ENCODE measurements at regions of chr5 and their contacts with region 1.

Region 1: GRCh38 chr5:52989781-52990527 is 802 bp downstream of the ITGA2 start:
- DNase-seq: peak; percentile 30 to 52
- ATAC-seq: peak; percentile 47 to 75 (median 56)
- H3K4me3 ChIP-seq: peak overlapping the region; percentile 75
- H3K27ac ChIP-seq: no peak overlapping the region
- H3K4me1 ChIP-seq: peaks cover 9% of the 10 kb centered on the region
- H3K27me3 ChIP-seq: peaks cover 0 to 29% (median 2%) of the 10 kb centered on the region in 3 donors
- CTCF ChIP-seq: peak; percentile 22

Region 2: GRCh38 chr5:53031695-53032096 is 41.7 kb after region 1 on chr5:
- intact Hi-C with region 1: loop called in 1 of 2 experiments (anchors 5 kb)
- DNase-seq: no peak
- ATAC-seq: no peak
- H3K4me3 ChIP-seq: no peak overlapping the region
- H3K27ac ChIP-seq: no peak overlapping the region
- H3K4me1 ChIP-seq: no peaks in the 10 kb centered on the region
- H3K27me3 ChIP-seq: no peaks in the 10 kb centered on the region
- CTCF ChIP-seq: no peak

Region 3: DNA sequence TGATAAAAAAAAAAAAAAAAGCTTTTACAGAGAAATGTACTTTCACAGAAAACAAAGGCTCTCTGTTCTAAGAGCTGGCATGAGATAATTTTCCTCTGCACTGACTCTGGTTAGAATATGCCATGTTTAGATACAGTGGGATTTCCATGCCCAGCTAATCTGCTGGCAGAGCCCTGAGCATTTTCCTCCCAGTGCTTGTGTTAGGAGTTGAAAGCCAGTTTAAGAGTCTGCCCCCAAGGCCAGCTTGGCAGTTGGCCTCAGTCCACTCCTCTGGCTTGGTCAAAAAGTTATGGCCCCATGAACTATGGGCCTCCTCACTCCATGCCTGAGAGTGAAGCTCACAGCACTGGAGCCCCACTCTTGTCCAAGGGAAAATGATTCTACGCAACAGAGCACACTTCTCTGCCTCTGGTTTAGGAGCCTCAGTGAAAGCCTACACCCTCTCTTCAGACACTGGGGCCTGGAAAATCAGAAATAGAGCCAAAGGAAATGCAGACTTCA is 97.7 kb after region 1 on chr5:
- intact Hi-C with region 1: no loop called
- DNase-seq: no peak
- ATAC-seq: no peak
- H3K4me3 ChIP-seq: no peak overlapping the region
- H3K27ac ChIP-seq: no peak overlapping the region
- H3K4me1 ChIP-seq: no peaks in the 10 kb centered on the region
- H3K27me3 ChIP-seq: no peaks in the 10 kb centered on the region
- CTCF ChIP-seq: no peak

Measured in psoas muscle (tissue), 8 donors.